H1 (cell line): ENCODE measurements at regions of chr12 and their contacts with region 1.

Region 1: GRCh38 chr12:111589601-111590000 is 9.5 kb downstream of the ATXN2 start:
- DNase-seq: no peak
- H3K4me3 ChIP-seq: no peak overlapping the region
- H3K27ac ChIP-seq: no peak overlapping the region
- H3K4me1 ChIP-seq: no peaks in the 10 kb centered on the region
- H3K27me3 ChIP-seq: no peaks in the 10 kb centered on the region
- CTCF ChIP-seq: no peak
- EP300 ChIP-seq: no peak
- POLR2A ChIP-seq: no peak
- RAD21 ChIP-seq: no peak

Region 2: DNA sequence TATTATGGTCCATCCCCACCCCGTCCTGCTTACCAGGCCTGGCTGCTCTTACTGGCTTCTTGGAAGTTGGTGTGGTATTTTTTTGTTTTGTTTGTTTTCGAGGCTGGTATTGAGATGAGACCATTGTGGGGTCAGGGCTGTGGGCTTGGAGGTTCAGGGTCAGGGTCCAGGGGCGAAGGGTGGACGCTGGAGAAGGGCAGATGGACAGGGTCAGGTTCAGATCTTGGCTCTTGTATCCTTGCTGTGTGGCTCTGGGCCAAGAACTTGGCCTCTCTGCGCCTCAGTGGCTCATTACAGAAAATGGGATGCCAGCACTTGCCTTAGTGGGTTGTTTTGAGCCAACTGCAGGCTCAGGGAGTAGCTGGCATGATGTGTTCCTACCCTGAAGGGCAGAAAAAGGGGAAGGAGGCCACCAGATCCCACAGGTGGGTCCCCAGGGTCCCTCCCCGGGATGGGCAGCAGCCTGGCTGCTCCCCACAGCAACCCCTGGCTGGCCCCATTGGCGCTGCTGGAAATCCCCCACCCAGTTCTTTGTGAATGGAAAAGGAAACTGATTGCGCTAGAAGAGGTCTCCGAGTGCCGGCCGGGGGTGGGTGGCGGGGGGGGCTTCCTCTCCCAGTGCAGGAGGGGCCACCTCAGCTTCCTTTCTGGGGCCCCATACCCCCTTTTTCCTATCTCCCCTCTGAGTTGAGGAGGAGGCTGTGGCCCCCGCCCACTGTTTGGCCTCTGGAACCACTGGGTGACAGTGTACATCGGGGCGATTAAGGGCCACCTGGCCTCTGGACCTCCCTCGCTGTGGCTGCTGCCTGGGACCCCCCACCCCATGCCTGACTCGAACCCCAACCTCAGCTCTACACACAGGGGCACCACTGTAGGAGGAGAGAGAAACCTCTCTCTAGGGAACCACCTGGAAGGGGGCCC is 158.9 kb before region 1 on chr12:
- CTCF ChIA-PET with region 1: no interaction called
- POLR2A ChIA-PET with region 1: no interaction called
- DNase-seq: no peak
- H3K4me3 ChIP-seq: no peak overlapping the region
- H3K27ac ChIP-seq: no peak overlapping the region
- H3K4me1 ChIP-seq: peaks cover 4 to 28% (median 22%) of the 10 kb centered on the region in 4 experiments
- H3K27me3 ChIP-seq: no peaks in the 10 kb centered on the region; a peak in 1 of 7 replicates
- CTCF ChIP-seq: no peak
- EP300 ChIP-seq: no peak
- POLR2A ChIP-seq: no peak
- RAD21 ChIP-seq: no peak

Region 3: GRCh38 chr12:111546758-111547383 is 42.7 kb before region 1 on chr12:
- CTCF ChIA-PET with region 1: no interaction called
- POLR2A ChIA-PET with region 1: no interaction called
- DNase-seq: no peak
- H3K4me3 ChIP-seq: no peak overlapping the region
- H3K27ac ChIP-seq: no peak overlapping the region
- H3K4me1 ChIP-seq: no peaks in the 10 kb centered on the region
- H3K27me3 ChIP-seq: no peaks in the 10 kb centered on the region
- CTCF ChIP-seq: no peak
- EP300 ChIP-seq: no peak
- POLR2A ChIP-seq: no peak
- RAD21 ChIP-seq: no peak

Region 4: GRCh38 chr12:111574797-111575443 is 14.7 kb before region 1 on chr12:
- CTCF ChIA-PET with region 1: interaction called, 5 read pairs
- POLR2A ChIA-PET with region 1: interaction called, 16 read pairs
- DNase-seq: peak in 1 of 2 experiments; percentile 44
- H3K4me3 ChIP-seq: no peak overlapping the region
- H3K27ac ChIP-seq: no peak overlapping the region
- H3K4me1 ChIP-seq: peaks cover 0 to 4% (median 1%) of the 10 kb centered on the region in 4 experiments; a peak in 3 of 7 replicates
- H3K27me3 ChIP-seq: no peaks in the 10 kb centered on the region
- CTCF ChIP-seq: no peak
- EP300 ChIP-seq: no peak
- POLR2A ChIP-seq: no peak
- RAD21 ChIP-seq: no peak